ENCODE measurements at regions of chr3 and their contacts with region 1.

Region 1: DNA sequence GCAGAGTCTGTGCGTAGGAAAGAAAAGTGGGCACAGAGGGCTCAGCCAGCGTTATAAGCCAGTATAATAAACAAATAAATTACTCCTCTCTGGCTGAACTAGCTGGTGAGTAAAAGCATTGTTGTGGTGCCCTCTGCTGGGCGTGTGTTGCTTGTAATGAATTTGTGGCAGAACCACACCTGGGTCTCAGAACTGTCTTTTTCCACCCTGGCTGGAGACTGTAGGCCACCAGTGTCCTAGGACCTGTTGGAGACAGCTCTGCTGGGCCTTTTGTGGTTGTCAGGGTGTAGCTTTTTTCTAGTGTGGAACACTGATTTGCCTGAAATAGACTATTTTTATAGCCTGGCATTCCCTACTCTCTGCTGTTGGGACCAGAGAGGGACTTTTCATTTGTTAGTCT is 130.5 kb upstream of the EIF1B start:
- DNase-seq: peak; percentile 67
- H3K4me3 ChIP-seq: no peak overlapping the region
- H3K27ac ChIP-seq: no peak overlapping the region
- H3K4me1 ChIP-seq: peaks cover 3% of the 10 kb centered on the region
- H3K27me3 ChIP-seq: no peaks in the 10 kb centered on the region
- CTCF ChIP-seq: peak; percentile 83

Region 2: DNA sequence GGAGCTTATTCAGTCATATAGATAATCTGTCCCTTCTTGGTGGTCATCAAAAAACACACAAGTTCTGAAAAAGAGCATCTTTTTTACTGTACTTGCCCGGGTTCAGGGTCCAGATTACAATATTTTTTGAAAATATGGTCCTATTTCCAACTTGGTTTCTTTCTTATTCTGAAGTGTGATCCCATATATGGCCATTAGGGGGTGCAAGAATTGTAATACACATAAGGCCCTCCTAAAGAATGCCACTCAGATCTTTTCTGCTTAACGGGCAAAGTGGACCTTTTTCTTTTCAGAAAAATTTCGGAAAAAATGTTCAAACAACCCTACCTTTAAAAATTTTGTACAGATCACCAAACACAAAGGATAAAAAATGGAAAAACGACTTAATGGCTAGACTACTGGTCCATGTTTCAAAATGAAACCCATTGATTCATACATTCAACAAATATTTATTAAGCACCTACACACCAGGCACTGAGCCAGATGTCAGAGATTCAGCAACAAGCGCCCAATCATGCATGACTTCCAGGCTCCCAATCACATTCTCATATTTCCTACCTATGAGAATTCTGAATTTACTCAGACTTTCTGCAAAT is 471.6 kb before region 1 on chr3:
- intact Hi-C with region 1: loop called (anchors 5 kb)
- DNase-seq: no peak
- H3K4me3 ChIP-seq: no peak overlapping the region
- H3K27ac ChIP-seq: no peak overlapping the region
- H3K4me1 ChIP-seq: no peaks in the 10 kb centered on the region
- H3K27me3 ChIP-seq: no peaks in the 10 kb centered on the region
- CTCF ChIP-seq: peak; percentile 81

Region 3: DNA sequence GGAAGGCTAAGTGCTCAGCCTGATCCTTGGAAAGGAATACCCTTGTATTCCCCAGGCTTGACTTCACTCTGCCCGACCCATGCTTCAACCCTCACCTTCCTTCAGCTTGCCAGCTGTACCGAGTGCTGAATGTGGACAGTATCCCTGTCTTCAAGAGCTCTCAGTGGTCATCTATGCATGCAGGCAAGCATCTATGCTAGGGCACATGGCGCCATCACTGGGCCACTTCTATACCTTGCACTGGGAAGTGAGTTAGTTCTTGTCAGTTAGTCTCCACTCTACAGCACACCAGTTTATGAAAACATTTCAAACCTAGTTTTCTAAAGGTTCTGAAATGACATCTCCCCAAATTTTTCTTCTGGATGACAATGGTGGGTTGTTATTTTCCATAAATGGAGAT is 451.6 kb before region 1 on chr3:
- intact Hi-C with region 1: loop called (anchors 5 kb)
- DNase-seq: no peak
- H3K4me3 ChIP-seq: no peak overlapping the region
- H3K27ac ChIP-seq: no peak overlapping the region
- H3K4me1 ChIP-seq: no peaks in the 10 kb centered on the region
- H3K27me3 ChIP-seq: no peaks in the 10 kb centered on the region
- CTCF ChIP-seq: no peak

Region 4: GRCh38 chr3:39809181-39809994 is 369.6 kb before region 1 on chr3 and contains the start of gene MYRIP:
- intact Hi-C with region 1: loop called (anchors 10 kb)
- DNase-seq: peak; percentile 61
- H3K4me3 ChIP-seq: peak within 1 kb of the TSS; percentile 75
- H3K27ac ChIP-seq: peak within 1 kb of the TSS; percentile 38
- H3K4me1 ChIP-seq: peaks cover 23% of the 10 kb centered on the region
- H3K27me3 ChIP-seq: peaks cover 41% of the 10 kb centered on the region
- CTCF ChIP-seq: no peak
- total RNA-seq, gene MYRIP: 1.5 TPM

Region 5: GRCh38 chr3:40109641-40110490 is 69.2 kb before region 1 on chr3:
- intact Hi-C with region 1: no loop called
- DNase-seq: no peak
- H3K4me3 ChIP-seq: no peak overlapping the region
- H3K27ac ChIP-seq: no peak overlapping the region
- H3K4me1 ChIP-seq: no peaks in the 10 kb centered on the region
- H3K27me3 ChIP-seq: no peaks in the 10 kb centered on the region
- CTCF ChIP-seq: peak; percentile 20

Region 6: DNA sequence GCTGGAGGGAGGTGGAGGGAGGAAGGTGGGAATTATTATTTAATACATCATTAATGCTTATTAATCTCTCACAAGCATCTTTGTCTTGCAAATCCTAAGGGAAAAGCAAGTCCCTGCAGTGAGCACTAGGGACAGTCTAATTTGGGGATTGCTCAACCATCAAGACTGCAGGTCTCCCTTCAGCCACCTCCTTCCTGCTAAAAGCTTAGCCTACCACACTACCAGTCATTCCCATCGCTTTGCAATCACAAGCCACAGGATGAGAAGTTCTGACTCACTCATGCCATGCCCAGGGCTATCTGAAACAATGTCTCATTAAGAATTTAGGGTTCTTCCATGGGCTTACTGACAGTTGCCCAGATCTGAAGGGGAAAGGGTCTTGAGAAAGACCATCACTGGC is 79.5 kb after region 1 on chr3:
- intact Hi-C with region 1: no loop called
- DNase-seq: no peak
- H3K4me3 ChIP-seq: no peak overlapping the region
- H3K27ac ChIP-seq: no peak overlapping the region
- H3K4me1 ChIP-seq: peaks cover 19% of the 10 kb centered on the region
- H3K27me3 ChIP-seq: no peaks in the 10 kb centered on the region
- CTCF ChIP-seq: no peak

Region 7: GRCh38 chr3:40278791-40279190 is 99.8 kb after region 1 on chr3:
- intact Hi-C with region 1: no loop called
- DNase-seq: no peak
- H3K4me3 ChIP-seq: no peak overlapping the region
- H3K27ac ChIP-seq: no peak overlapping the region
- H3K4me1 ChIP-seq: peaks cover 4% of the 10 kb centered on the region
- H3K27me3 ChIP-seq: no peaks in the 10 kb centered on the region
- CTCF ChIP-seq: no peak